Tibial artery (tissue), 4 donors: ENCODE measurements at regions of chr4 and their contacts with region 1.

Region 1: DNA sequence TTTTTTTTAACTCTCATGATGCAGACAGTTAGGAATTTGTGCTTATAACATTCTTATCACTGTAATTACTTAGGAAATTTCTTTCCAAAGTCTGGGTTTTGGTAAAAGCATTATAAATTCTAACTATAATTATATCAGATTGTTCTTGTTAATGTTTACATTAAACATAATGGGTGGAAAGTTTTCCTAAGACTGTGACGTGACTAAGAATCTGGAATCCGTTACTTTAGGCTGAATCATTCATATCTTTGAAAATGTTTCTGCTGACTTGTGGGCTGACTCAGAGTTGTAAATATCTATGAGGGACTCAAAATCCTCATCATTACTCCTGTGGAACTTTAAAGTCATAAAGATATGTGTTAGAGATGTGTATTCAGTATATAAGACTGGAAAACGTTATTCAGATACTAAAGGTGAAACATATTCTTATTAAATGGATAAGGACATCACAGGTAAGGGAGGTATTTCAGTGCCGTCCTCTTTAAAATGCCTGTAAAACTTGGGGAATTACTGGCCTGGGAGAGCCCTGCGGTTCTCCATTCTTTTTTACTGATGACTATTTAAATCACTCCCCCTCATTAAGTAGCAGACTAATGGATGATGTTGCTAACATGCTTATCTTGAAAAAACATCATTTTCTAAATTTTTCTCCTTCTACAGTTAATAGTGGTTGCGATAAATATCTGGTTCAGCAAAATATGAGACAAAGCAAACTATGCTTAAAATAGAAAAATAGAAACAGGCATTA is 159.0 kb downstream of the DCLK2 start:
- DNase-seq: no peak
- H3K4me3 ChIP-seq: no peak overlapping the region
- H3K27ac ChIP-seq: peak overlapping the region; percentile 66 to 67
- H3K4me1 ChIP-seq: peaks cover 0 to 32% (median 12%) of the 10 kb centered on the region in 4 donors
- H3K27me3 ChIP-seq: no peaks in the 10 kb centered on the region
- CTCF ChIP-seq: no peak

Region 2: GRCh38 chr4:150063128-150063527 is 174.2 kb before region 1 on chr4:
- intact Hi-C with region 1: no loop called
- DNase-seq: no peak
- H3K4me3 ChIP-seq: no peak overlapping the region
- H3K27ac ChIP-seq: no peak overlapping the region
- H3K4me1 ChIP-seq: no peaks in the 10 kb centered on the region
- H3K27me3 ChIP-seq: no peaks in the 10 kb centered on the region
- CTCF ChIP-seq: no peak

Region 3: GRCh38 chr4:150078637-150079581 is 158.4 kb before region 1 on chr4:
- intact Hi-C with region 1: loop called (anchors 10 kb)
- DNase-seq: peak; percentile 38 to 81
- H3K4me3 ChIP-seq: peak overlapping the region; percentile 66 to 72
- H3K27ac ChIP-seq: peak overlapping the region; percentile 81 to 83
- H3K4me1 ChIP-seq: peaks cover 0 to 32% (median 18%) of the 10 kb centered on the region in 4 donors
- H3K27me3 ChIP-seq: no peaks in the 10 kb centered on the region
- CTCF ChIP-seq: no peak

Region 4: DNA sequence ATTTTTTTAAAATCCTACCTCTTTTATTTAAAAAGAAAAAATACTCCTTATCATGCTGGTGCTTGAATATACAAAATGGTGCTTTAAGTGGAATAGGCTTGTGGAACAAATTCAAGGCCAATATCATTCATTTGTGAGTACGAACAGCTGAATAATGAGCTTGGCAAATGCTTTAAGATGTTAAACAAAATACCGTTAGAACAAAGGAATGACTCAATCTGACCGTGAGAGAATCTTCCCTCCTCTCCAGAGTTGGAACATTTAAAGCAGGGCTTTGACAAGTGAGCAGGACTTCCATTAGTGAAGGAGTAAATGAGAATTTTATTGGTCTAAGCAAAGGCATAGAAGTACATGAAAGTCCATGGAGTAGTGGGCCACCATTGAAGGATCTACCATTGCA is 84.5 kb before region 1 on chr4:
- intact Hi-C with region 1: no loop called
- DNase-seq: no peak
- H3K4me3 ChIP-seq: no peak overlapping the region
- H3K27ac ChIP-seq: no peak overlapping the region
- H3K4me1 ChIP-seq: peaks cover 0 to 25% (median 9%) of the 10 kb centered on the region in 4 donors
- H3K27me3 ChIP-seq: no peaks in the 10 kb centered on the region
- CTCF ChIP-seq: no peak